ENCODE measurements at regions of chr16 and their contacts with region 1.

Region 1: GRCh38 chr16:85821441-85822135 is 22.1 kb downstream of the COX4I1 start:
- DNase-seq: peak; percentile 76
- ATAC-seq: peak; percentile 90
- H3K4me3 ChIP-seq: no peak overlapping the region
- H3K27ac ChIP-seq: no peak overlapping the region
- H3K4me1 ChIP-seq: peaks cover 2 to 14% of the 10 kb centered on the region in 2 experiments; a peak in 3 of 4 replicates
- H3K27me3 ChIP-seq: 0 out of 2 replicates have a peak, but pooled peaks cover 4% of the 10 kb centered on the region
- CTCF ChIP-seq: peak; percentile 98 to 100 (median 99)
- POLR2A ChIP-seq: no peak
- RAD21 ChIP-seq: peak; percentile 100

Region 2: DNA sequence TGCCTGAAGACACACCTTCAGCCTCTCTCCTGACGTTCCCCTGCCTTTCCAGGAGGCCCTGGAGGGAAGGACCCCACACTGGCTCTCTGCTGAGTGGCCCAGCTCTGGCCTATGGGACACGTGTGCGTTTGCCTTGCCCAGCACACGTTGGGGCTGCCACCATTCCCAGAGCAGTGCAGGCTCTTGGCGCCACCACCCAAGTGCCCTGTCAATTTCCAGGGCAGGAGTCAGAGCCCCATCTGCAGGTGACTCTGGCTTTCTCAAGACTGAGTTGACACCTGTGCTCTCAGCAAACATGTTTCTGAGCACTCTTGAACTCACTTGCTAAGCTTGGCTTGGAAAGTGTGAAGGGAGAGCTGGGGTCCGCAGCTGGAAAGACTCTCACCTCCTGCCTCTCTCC is 72.7 kb after region 1 on chr16:
- CTCF ChIA-PET with region 1: interaction called, 56 read pairs
- POLR2A ChIA-PET with region 1: no interaction called
- RAD21 ChIA-PET with region 1: interaction called, 3 to 13 read pairs
- intact Hi-C with region 1: loop called (anchors 1 kb)
- DNase-seq: peak; percentile 38
- ATAC-seq: peak; percentile 82
- H3K4me3 ChIP-seq: no peak overlapping the region
- H3K27ac ChIP-seq: no peak overlapping the region
- H3K4me1 ChIP-seq: peaks cover 10 to 14% of the 10 kb centered on the region in 2 experiments
- H3K27me3 ChIP-seq: peaks cover 16% of the 10 kb centered on the region; the same call in 1 of the 2 replicates
- CTCF ChIP-seq: peak; percentile 37 to 67 (median 40); a peak in 5 of 6 replicates
- POLR2A ChIP-seq: no peak
- RAD21 ChIP-seq: peak; percentile 75

Region 3: GRCh38 chr16:85986931-85987749 is 165.6 kb after region 1 on chr16:
- CTCF ChIA-PET with region 1: interaction called, 232 read pairs
- POLR2A ChIA-PET with region 1: interaction called, 10 read pairs
- RAD21 ChIA-PET with region 1: interaction called, 19 to 34 read pairs
- intact Hi-C with region 1: loop called (anchors 1 kb)
- DNase-seq: no peak
- ATAC-seq: peak; percentile 88
- H3K4me3 ChIP-seq: no peak overlapping the region
- H3K27ac ChIP-seq: no peak overlapping the region
- H3K4me1 ChIP-seq: no peaks in the 10 kb centered on the region
- H3K27me3 ChIP-seq: peaks cover 77% of the 10 kb centered on the region
- CTCF ChIP-seq: peak; percentile 39 to 85 (median 57); a peak in 5 of 6 replicates
- POLR2A ChIP-seq: no peak
- RAD21 ChIP-seq: peak; percentile 71

Region 4: GRCh38 chr16:86016201-86016871 is 194.7 kb after region 1 on chr16:
- CTCF ChIA-PET with region 1: interaction called, 104 read pairs
- POLR2A ChIA-PET with region 1: interaction called, 6 read pairs
- RAD21 ChIA-PET with region 1: interaction called, 10 to 17 read pairs
- intact Hi-C with region 1: loop called (anchors 1 kb)
- DNase-seq: peak; percentile 61
- ATAC-seq: peak; percentile 90
- H3K4me3 ChIP-seq: no peak overlapping the region
- H3K27ac ChIP-seq: no peak overlapping the region
- H3K4me1 ChIP-seq: no peaks in the 10 kb centered on the region
- H3K27me3 ChIP-seq: no peaks in the 10 kb centered on the region
- CTCF ChIP-seq: peak; percentile 81 to 94 (median 90)
- POLR2A ChIP-seq: no peak
- RAD21 ChIP-seq: peak; percentile 94

Region 5: DNA sequence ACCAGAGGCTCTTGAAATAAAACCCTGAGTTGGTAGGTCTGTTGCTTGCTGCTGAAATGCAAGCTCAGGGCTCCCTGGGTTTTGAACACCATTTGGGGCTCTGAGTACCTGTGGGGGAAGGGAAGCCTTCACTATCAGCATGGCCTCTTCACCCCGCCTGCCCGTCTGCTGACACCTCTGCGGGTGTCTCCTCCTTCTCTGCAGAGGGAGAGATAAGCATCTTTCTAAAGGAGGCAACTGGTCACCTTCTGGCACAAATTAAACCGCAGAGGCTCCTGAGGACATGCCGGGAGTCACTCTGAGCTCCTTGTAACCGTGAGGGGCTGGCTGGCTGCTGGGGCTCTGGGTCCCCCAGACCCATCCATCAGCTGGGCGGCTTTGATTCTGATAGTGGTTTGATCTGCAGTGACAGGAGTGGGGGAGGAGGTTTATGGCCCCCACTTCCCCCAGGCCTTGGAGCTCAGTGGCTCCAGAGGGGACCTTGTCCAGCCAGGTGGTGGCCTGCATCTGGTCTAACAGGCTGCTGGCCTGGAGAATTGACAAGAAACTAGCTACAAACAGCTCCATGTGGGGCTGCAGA is 200.9 kb after region 1 on chr16:
- CTCF ChIA-PET with region 1: interaction called, 104 read pairs
- POLR2A ChIA-PET with region 1: no interaction called
- RAD21 ChIA-PET with region 1: interaction called, 10 to 17 read pairs
- intact Hi-C with region 1: no loop called
- DNase-seq: no peak
- ATAC-seq: no peak
- H3K4me3 ChIP-seq: no peak overlapping the region
- H3K27ac ChIP-seq: no peak overlapping the region
- H3K4me1 ChIP-seq: no peaks in the 10 kb centered on the region; a peak in 1 of 4 replicates
- H3K27me3 ChIP-seq: peaks cover 8% of the 10 kb centered on the region
- CTCF ChIP-seq: no peak
- POLR2A ChIP-seq: no peak
- RAD21 ChIP-seq: no peak

Region 6: DNA sequence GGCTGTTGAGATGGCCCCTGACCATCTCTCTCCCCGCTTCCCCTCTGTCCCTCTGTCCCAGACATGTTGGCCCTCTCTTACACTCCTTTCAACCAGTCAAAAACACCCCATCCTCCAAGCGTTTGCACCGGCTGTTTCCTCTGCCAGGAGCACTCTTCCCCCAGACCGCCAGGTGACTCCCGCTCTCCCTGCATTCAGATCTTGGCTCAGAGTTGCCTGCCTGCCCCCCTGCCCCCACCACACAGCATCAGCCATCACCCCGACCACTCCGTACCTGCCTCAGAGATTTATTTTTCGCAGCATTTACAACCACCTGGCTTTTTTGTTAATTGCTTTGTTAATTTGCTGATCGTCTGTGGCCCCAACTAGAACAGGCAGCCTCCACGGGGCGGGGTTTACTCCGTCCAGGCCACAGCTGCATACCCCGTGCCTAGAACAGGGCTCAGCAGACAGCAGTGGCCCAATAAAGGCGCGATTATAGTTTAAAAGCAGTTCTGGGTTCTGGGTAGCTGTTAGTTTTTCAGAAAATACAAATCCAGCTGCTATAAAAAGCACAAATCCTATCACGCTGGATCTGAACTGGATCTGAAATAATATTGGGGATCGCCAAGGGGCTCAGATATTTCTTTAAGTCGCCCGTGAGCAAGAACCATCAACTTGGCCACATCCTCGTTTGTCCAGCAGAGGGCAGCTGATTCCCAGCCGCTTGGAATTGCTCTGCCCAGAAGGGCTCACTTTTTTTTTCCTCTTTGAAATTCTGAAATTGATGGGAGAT is 250.9 kb after region 1 on chr16:
- CTCF ChIA-PET with region 1: interaction called, 17 read pairs
- POLR2A ChIA-PET with region 1: no interaction called
- RAD21 ChIA-PET with region 1: no interaction called
- intact Hi-C with region 1: no loop called
- DNase-seq: peak; percentile 68
- ATAC-seq: peak; percentile 87
- H3K4me3 ChIP-seq: no peak overlapping the region; a peak in 1 of 4 replicates
- H3K27ac ChIP-seq: no peak overlapping the region
- H3K4me1 ChIP-seq: peaks cover 0 to 4% of the 10 kb centered on the region in 2 experiments; a peak in 1 of 4 replicates
- H3K27me3 ChIP-seq: no peaks in the 10 kb centered on the region
- CTCF ChIP-seq: peak; percentile 81 to 96 (median 88)
- POLR2A ChIP-seq: no peak
- RAD21 ChIP-seq: peak; percentile 92

Region 7: GRCh38 chr16:86519649-86520316 is 698.2 kb after region 1 on chr16:
- CTCF ChIA-PET with region 1: interaction called, 36 read pairs
- POLR2A ChIA-PET with region 1: interaction called, 3 read pairs
- RAD21 ChIA-PET with region 1: interaction called, 6 to 7 read pairs
- intact Hi-C with region 1: no loop called
- DNase-seq: peak; percentile 63
- ATAC-seq: peak; percentile 79
- H3K4me3 ChIP-seq: peak overlapping the region in 1 of 2 experiments; percentile 8; a peak in 1 of 4 replicates
- H3K27ac ChIP-seq: no peak overlapping the region; the same call in 1 of the 2 replicates
- H3K4me1 ChIP-seq: peaks cover 4 to 13% of the 10 kb centered on the region in 2 experiments; a peak in 3 of 4 replicates
- H3K27me3 ChIP-seq: no peaks in the 10 kb centered on the region
- CTCF ChIP-seq: peak; percentile 95 to 97 (median 97)
- POLR2A ChIP-seq: no peak
- RAD21 ChIP-seq: peak; percentile 95

Measured in HCT116 (cell line).